Ascending aorta (tissue), 2 donors: ENCODE measurements at regions of chr11 and their contacts with region 1.

Region 1: DNA sequence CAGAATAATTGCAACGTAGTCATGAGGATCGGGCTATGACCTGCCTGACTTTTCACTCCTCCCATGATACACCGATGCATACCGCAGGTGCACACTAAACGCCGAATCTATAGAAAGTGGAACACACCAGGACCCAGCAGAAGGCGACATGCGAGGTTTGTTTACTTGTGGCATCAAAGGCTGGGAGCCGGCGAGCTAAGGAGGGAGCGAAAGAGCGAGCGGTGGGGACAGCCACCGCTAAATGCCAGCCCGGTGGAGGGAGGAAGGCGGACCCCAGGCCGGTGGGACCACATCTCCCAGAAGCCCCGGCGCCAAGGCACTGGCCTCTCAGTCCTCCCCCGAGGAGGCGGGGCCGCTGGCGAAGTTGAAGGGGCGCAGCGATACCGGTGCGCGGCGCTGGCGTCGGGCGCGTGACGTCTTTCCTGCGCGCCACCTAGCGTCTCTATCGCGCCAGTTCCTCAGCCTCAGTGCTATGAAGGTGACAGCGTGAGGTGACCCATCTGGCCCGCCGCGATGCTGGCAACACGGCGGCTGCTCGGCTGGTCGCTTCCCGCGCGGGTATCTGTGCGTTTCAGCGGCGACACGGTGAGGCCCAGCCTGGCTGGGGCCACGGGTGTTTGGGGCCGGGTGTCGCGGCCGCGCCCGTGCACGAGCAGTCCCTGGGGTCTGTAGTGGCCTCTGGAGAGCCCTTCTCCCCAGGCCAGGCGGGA is at the start of gene NDUFV1:
- DNase-seq: peak; percentile 86 to 99
- H3K4me3 ChIP-seq: peak within 1 kb of the TSS; percentile 96 to 99
- H3K27ac ChIP-seq: peak within 1 kb of the TSS; percentile 66 to 78
- H3K4me1 ChIP-seq: peaks cover 7 to 22% of the 10 kb centered on the region in 2 donors
- H3K27me3 ChIP-seq: no peaks in the 10 kb centered on the region
- CTCF ChIP-seq: peak; percentile 66 to 83 (median 68)
- total RNA-seq, gene NDUFV1: 128 TPM

Region 2: GRCh38 chr11:67572747-67573419 is 33.8 kb before region 1 on chr11:
- intact Hi-C with region 1: loop called (anchors 1 kb)
- DNase-seq: no peak
- H3K4me3 ChIP-seq: no peak overlapping the region
- H3K27ac ChIP-seq: no peak overlapping the region
- H3K4me1 ChIP-seq: no peaks in the 10 kb centered on the region
- H3K27me3 ChIP-seq: no peaks in the 10 kb centered on the region
- CTCF ChIP-seq: peak; percentile 61 to 84 (median 79)